Activated B cell treated with CpG ODN at 0.5 μM for 24 hours (primary cell): ENCODE measurements at regions of chr12 and their contacts with region 1.

Region 1: DNA sequence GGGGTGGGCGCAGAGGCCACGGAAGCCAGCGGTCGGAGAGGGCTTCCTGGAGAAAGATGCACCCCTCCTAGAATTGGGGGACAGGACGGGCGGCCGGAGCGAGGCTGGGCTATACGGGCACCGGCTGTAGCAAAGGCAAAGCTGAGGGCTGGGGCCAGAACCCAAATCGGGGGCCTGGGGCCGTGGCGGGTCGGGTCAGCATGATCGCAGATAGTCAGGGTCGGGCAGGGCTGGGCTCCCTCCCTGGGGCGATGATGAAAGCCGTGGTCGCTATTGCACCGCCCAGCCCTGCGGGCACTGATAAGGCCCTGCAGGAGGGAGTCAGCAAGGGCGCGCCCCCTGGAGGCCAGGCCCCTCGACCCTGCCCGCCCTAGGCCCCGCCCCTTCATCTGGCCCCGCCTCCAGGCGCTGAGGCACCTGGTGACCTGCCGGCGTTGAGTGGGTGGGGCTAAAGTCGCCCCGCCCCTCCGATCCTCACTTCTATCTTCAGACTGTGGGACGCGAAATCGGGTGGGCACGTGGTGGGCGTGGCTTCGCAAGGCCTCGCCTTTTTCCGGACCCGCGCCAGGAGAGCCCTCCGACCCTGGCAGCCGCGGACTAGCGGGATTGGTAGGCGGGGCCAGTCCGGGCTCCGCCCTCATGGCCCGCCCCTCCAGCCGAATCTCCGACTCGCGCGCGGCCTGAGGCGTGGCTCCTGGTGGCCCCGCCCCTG is 418 bp upstream of the SH2B3 start:
- DNase-seq: peak; percentile 99
- ATAC-seq: peak; percentile 71
- H3K4me3 Mint-ChIP-seq: peak overlapping the region; percentile 91
- H3K27ac Mint-ChIP-seq: peak overlapping the region; percentile 97
- H3K4me1 Mint-ChIP-seq: peaks cover 64% of the 10 kb centered on the region
- H3K27me3 Mint-ChIP-seq: no peaks in the 10 kb centered on the region
- CTCF ChIP-seq: no peak

Region 2: DNA sequence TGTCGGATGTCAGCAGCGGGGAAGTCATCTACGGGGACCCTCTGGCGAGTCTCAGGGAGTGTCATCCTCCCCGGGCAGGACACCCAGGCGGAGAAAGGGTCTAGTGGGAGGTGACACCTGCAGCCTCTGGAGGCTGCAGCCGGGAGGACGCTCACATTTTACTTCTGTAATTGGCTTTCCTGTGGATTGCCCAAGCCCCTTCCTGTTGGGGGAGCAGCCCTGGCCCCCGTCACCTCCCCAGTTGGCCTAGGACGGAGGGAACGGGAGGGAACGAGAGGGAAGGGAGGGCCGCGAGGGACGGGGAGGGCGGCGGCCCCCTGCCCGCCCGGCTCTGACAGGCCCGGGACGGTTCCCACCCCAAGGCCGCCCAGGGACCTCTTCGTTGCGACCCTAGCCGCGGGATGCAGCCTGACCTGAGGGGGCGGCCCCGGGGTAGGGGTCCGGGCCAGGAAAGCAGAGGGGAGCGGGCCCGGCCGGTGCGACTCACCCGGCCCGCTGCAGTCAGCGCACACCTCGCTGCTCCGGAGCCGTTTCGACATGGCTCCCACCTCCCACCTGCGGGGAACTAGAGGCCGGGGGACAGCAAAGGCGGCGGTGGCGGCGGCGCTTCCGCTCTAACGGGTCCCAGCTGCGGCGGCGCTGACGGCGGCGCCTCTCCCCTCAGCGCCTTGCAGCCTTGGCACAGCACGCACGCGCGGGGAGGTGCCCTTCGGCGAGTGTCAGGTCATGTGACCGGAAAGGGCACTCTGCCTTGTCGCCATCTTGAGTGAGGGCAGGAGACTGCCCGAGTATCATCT is 1409.4 kb before region 1 on chr12 and contains the start of gene GIT2:
- CTCF ChIA-PET with region 1: no interaction called
- POLR2A ChIA-PET with region 1: no interaction called
- intact Hi-C with region 1: loop called (anchors 10 kb)
- DNase-seq: peak; percentile 86
- ATAC-seq: peak; percentile 72
- H3K4me3 Mint-ChIP-seq: peak within 1 kb of the TSS; percentile 96
- H3K27ac Mint-ChIP-seq: peak within 1 kb of the TSS; percentile 95
- H3K4me1 Mint-ChIP-seq: peaks cover 80% of the 10 kb centered on the region
- H3K27me3 Mint-ChIP-seq: no peaks in the 10 kb centered on the region
- CTCF ChIP-seq: no peak
- total RNA-seq, gene GIT2: 89.2 and 107 TPM in 2 replicates

Region 3: DNA sequence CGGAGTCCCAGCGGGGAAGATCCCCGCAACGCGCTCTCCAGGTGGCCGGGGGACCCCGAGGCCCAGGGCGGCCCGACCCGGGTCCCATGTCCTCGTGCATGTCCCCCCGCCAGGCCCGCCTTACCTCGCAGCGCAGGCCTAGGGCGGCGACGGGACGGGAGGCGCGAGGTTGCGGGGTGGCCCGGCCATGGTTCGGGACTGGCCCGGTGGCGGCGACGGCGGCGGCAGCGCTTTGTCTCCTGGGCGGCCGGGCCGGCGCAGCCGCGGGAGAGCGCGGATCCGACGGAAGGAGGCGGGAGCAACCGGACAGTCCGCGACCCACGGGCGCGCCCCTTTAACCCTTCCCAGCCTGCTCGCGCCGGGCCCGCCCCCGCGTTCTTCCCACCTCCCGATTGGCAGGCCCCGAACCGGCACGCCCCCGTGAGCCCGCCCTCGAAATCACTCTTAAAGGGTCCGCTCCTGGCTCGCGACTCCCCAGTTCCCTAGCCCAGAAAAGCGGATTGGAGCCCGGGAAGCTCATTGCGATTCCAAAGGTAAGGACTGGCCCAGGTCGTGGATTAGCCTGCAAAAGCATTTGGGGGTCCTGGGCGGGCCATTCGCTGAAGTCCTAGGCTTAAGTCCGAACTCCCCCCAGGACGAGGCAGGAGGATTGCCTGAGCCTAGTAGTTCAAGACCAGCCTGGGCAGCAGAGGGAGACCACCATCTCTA is 36.4 kb before region 1 on chr12 and contains the start of gene PHETA1:
- CTCF ChIA-PET with region 1: no interaction called
- POLR2A ChIA-PET with region 1: no interaction called
- intact Hi-C with region 1: loop called (anchors 1 kb)
- DNase-seq: peak; percentile 80
- ATAC-seq: peak; percentile 96
- H3K4me3 Mint-ChIP-seq: peak within 1 kb of the TSS; percentile 85
- H3K27ac Mint-ChIP-seq: no peak within 1 kb of the TSS
- H3K4me1 Mint-ChIP-seq: peaks cover 35% of the 10 kb centered on the region
- H3K27me3 Mint-ChIP-seq: no peaks in the 10 kb centered on the region
- CTCF ChIP-seq: no peak
- total RNA-seq, gene PHETA1: 1.6 and 2.0 TPM in 2 replicates

Region 4: GRCh38 chr12:111434680-111435338 is 29.5 kb after region 1 on chr12:
- CTCF ChIA-PET with region 1: interaction called, 26 read pairs
- POLR2A ChIA-PET with region 1: interaction called, 136 read pairs
- intact Hi-C with region 1: loop called (anchors 1 kb)
- DNase-seq: peak; percentile 75
- ATAC-seq: peak; percentile 80
- H3K4me3 Mint-ChIP-seq: peak overlapping the region; percentile 83
- H3K27ac Mint-ChIP-seq: peak overlapping the region; percentile 92
- H3K4me1 Mint-ChIP-seq: peaks cover 95% of the 10 kb centered on the region
- H3K27me3 Mint-ChIP-seq: no peaks in the 10 kb centered on the region
- CTCF ChIP-seq: no peak

Region 5: DNA sequence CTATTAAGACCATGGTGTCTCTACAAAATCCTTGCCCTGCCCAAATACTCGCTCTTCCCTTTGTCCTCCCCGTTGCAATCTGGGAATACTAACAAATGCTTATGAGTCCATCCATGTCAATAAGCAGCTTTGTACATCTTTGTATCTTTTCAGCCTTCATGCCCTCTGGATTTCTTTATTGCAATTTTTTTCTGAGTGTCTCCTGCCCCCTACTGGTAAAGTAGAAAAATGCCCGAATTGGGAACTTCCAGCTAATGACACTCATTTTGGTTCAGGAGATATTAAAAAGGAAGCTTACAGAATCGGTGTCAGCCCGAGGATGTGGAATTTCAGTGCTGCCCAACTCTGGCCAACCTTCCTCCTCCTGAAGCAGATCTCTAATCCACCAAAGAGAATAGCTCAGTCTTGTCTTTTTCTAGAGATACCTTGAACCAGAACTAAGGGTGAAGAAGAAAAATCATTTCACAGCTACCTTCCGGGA is 46.4 kb after region 1 on chr12:
- CTCF ChIA-PET with region 1: interaction called, 522 read pairs
- POLR2A ChIA-PET with region 1: interaction called, 122 read pairs
- intact Hi-C with region 1: loop called (anchors 1 kb)
- DNase-seq: no peak
- ATAC-seq: peak; percentile 62
- H3K4me3 Mint-ChIP-seq: no peak overlapping the region
- H3K27ac Mint-ChIP-seq: no peak overlapping the region
- H3K4me1 Mint-ChIP-seq: peaks cover 28% of the 10 kb centered on the region
- H3K27me3 Mint-ChIP-seq: no peaks in the 10 kb centered on the region
- CTCF ChIP-seq: peak; percentile 24

Region 6: GRCh38 chr12:111599459-111600204 is 194.3 kb after region 1 on chr12:
- CTCF ChIA-PET with region 1: no interaction called
- POLR2A ChIA-PET with region 1: interaction called, 3 read pairs
- intact Hi-C with region 1: loop called (anchors 2 kb)
- DNase-seq: peak; percentile 93
- ATAC-seq: peak; percentile 81
- H3K4me3 Mint-ChIP-seq: peak overlapping the region; percentile 86
- H3K27ac Mint-ChIP-seq: peak overlapping the region; percentile 88
- H3K4me1 Mint-ChIP-seq: peaks cover 29% of the 10 kb centered on the region
- H3K27me3 Mint-ChIP-seq: no peaks in the 10 kb centered on the region
- CTCF ChIP-seq: no peak